ENCODE measurements at regions of chr4 and their contacts with region 1.

Region 1: DNA sequence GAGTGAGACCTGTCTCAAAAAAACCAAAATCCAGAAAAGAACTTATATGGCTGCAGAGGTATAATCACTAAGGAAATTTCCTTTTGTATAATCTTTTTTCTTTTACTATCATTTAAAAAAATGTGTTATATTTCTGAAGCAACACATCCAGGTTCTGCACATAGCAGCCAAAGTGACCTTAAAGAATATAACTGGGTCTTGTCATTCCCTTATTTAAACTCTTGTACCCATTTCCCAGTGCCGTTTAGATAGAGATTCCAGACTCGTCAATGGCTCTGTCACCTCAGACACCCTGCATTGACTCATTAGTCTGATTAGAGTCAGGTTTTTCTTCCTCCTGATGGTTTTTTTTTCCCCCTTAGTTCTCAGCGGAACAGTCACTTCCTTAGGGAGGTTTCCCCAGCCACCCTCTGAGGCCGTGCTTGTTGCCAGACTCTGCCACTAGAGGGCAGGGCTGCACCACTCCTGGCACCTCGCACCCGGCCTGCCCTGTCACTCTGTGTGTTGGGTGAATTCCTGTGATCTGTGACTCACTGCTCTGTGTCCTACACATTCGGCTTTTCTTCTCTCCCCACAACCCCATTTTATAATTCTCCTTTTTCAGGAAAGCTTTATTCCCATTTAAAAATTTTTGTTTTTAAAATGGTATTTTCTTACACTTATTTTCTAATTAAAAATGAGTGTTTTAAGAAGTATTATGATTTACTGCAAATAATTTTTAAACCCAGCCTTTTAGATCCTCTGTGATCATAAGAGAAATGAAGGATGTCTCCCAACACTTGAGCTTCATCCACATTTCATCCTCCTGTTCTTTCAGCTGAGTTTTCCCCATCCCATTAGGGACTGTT is 32.1 kb downstream of the HTT start:
- DNase-seq: peak; percentile 87
- ATAC-seq: peak; percentile 100
- H3K4me3 Mint-ChIP-seq: no peak overlapping the region
- H3K27ac Mint-ChIP-seq: peak overlapping the region; percentile 67
- H3K4me1 Mint-ChIP-seq: peaks cover 9% of the 10 kb centered on the region
- H3K27me3 Mint-ChIP-seq: no peaks in the 10 kb centered on the region

Region 2: GRCh38 chr4:3091464-3091863 is 15.1 kb before region 1 on chr4:
- CTCF ChIA-PET with region 1: interaction called, 19 read pairs
- POLR2A ChIA-PET with region 1: no interaction called
- DNase-seq: no peak
- ATAC-seq: no peak
- H3K4me3 Mint-ChIP-seq: no peak overlapping the region
- H3K27ac Mint-ChIP-seq: no peak overlapping the region
- H3K4me1 Mint-ChIP-seq: peaks cover 8% of the 10 kb centered on the region
- H3K27me3 Mint-ChIP-seq: no peaks in the 10 kb centered on the region

Region 3: DNA sequence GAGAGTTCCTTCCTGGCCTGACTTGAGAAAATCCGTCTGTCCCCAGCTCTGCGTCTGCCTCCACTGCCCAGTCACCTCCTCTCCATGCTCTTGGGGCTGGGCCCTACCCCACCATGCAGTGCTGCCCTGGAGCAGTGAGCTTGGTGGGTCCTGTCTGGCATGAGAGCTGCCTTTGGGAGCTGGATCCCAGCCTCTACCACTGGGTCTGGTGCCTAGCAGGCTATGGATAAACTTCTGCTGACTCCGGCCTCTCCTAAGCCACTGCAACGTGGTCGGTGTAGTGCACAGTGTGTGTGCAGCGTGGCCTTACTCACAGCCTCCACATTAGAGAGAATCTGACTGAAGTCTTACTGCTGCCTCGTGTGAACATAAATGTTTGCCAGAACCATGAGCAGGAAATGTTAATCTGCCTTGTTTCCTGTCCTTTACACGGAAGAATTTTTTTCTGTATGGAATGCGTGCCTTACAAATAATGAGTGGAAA is 15.6 kb after region 1 on chr4:
- CTCF ChIA-PET with region 1: interaction called, 20 read pairs
- POLR2A ChIA-PET with region 1: interaction called, 3 read pairs
- DNase-seq: no peak
- ATAC-seq: peak; percentile 53
- H3K4me3 Mint-ChIP-seq: no peak overlapping the region
- H3K27ac Mint-ChIP-seq: peak overlapping the region; percentile 47
- H3K4me1 Mint-ChIP-seq: peaks cover 6% of the 10 kb centered on the region
- H3K27me3 Mint-ChIP-seq: no peaks in the 10 kb centered on the region

Region 4: DNA sequence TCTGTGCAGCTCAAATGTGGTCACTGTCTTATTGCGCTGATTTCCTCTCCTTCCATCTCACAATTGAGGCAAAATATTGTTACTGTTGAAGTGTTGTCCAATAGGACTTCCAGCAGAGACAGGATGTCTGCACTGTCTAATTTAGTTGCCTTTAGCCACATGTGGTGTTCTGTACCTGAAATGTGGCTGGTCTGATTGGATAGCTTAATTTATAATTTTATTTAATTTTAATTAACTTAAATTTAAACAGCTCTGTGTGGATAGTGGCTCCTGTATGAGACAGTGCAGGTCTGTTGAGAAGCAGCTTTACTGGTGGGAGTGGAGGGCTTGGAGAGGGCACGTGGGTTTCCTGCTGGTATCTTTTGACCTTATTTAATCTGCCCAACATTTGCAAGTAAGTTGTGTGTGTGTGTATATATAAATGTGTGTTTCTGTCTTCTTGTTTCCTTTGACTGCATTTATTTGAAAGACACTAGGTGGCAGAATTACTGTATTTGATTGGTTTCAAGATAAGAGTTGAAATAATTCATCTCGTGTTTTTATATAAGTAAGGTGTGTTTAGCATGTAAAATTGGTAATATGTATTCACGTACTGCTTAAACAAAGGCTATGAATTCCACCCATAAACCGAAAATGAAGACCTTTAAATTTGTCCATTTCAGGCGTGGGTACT is 87.1 kb after region 1 on chr4:
- CTCF ChIA-PET with region 1: interaction called, 14 read pairs
- POLR2A ChIA-PET with region 1: no interaction called
- DNase-seq: no peak
- ATAC-seq: peak; percentile 24
- H3K4me3 Mint-ChIP-seq: no peak overlapping the region
- H3K27ac Mint-ChIP-seq: peak overlapping the region; percentile 51
- H3K4me1 Mint-ChIP-seq: peaks cover 62% of the 10 kb centered on the region
- H3K27me3 Mint-ChIP-seq: no peaks in the 10 kb centered on the region

Region 5: GRCh38 chr4:3480528-3481112 is 374.1 kb after region 1 on chr4:
- CTCF ChIA-PET with region 1: interaction called, 11 read pairs
- POLR2A ChIA-PET with region 1: no interaction called
- DNase-seq: peak; percentile 83
- ATAC-seq: peak; percentile 78
- H3K4me3 Mint-ChIP-seq: no peak overlapping the region
- H3K27ac Mint-ChIP-seq: no peak overlapping the region
- H3K4me1 Mint-ChIP-seq: peaks cover 7% of the 10 kb centered on the region
- H3K27me3 Mint-ChIP-seq: peaks cover 11% of the 10 kb centered on the region